K562 (cell line): ENCODE measurements at regions of chr10 and their contacts with region 1.

Region 1: GRCh38 chr10:4839401-4839800 is 13.4 kb downstream of the AKR1E2 start:
- DNase-seq: peak in 2 of 4 experiments; percentile 22 to 39
- ATAC-seq: peak; percentile 92
- H3K4me3 ChIP-seq: no peak overlapping the region
- H3K27ac ChIP-seq: no peak overlapping the region
- H3K4me1 ChIP-seq: peaks cover 0 to 2% of the 10 kb centered on the region in 2 experiments; a peak in 1 of 5 replicates
- H3K27me3 ChIP-seq: no peaks in the 10 kb centered on the region
- CTCF ChIP-seq: peak; percentile 29 to 38 (median 36); a peak in 4 of 6 replicates
- EP300 ChIP-seq: no peak
- POLR2A ChIP-seq: no peak
- RAD21 ChIP-seq: peak in 1 of 2 experiments; percentile 36; a peak in 2 of 4 replicates

Region 2: DNA sequence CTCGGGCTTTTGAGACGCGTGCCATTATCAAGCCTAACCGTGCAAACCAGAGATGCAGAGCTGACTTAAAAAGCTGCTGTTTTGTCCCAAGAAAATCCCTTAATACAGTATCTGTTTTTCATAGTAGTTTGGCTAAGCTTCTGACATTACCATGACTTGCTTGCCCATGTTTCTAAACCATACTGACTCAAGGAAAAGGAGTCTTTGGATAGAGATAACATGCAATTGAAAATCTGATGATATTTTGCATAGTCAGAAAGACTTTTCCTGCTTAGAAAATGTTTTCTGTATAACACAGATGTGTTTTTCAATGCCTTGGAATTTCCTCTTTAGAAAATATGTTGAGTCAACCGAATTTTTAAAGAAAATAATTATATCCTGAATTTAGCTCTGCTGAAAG is 34.9 kb before region 1 on chr10:
- CTCF ChIA-PET with region 1: no interaction called
- POLR2A ChIA-PET with region 1: no interaction called
- in situ Hi-C with region 1: no loop called
- intact Hi-C with region 1: no loop called
- DNase-seq: no peak
- ATAC-seq: no peak
- H3K4me3 ChIP-seq: no peak overlapping the region
- H3K27ac ChIP-seq: no peak overlapping the region
- H3K4me1 ChIP-seq: no peaks in the 10 kb centered on the region
- H3K27me3 ChIP-seq: peaks cover 13 to 22% of the 10 kb centered on the region in 2 experiments
- CTCF ChIP-seq: no peak
- EP300 ChIP-seq: no peak
- POLR2A ChIP-seq: no peak
- RAD21 ChIP-seq: no peak

Region 3: DNA sequence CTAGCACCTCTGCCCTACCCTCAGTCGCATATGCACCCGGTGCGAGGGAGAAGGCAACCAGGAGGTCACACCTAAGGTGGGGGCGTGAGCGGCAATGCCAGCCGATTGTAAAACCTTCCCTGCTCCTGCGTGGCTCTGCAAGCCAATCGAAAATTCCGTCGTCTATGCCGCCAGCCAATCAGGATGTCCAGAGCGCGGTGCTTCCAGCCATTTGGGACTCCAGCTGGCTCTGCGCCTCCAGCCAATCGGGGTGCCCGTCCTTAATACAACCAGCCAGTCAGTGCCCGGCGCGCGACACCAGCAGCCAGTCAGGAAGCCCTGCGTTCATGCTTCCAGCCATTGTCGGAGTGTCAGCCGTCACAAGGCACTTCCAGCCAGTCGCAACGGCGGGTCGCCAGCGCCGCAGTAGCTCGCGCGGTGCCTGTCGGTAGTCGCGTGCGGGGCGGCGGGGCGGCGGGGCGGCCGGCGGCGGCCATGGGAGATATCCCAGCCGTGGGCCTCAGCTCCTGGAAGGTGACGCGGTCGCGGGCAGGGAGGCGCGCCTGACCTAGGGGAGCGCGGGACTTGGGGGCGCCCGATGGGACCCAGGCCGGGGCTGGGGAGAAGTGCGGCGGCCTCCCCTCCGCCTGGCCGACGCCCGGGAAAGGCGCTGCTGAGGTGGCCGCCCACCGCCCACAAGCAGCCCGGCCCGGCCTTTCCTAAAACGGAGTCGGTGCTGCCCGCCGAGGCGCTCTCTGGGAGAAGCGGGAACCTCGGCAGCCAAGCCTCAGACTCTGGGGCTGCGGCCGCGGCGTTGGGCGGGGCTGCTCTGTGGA is 13.3 kb before region 1 on chr10 and contains the start of gene AKR1E2:
- CTCF ChIA-PET with region 1: no interaction called
- POLR2A ChIA-PET with region 1: interaction called, 25 read pairs
- in situ Hi-C with region 1: no loop called
- intact Hi-C with region 1: no loop called
- DNase-seq: peak; percentile 87 to 92 (median 90)
- ATAC-seq: peak; percentile 95
- H3K4me3 ChIP-seq: peak within 1 kb of the TSS; percentile 46
- H3K27ac ChIP-seq: peak within 1 kb of the TSS; percentile 88
- H3K4me1 ChIP-seq: peaks cover 24 to 29% of the 10 kb centered on the region in 2 experiments
- H3K27me3 ChIP-seq: no peaks in the 10 kb centered on the region
- CTCF ChIP-seq: no peak
- EP300 ChIP-seq: no peak
- POLR2A ChIP-seq: peak; percentile 79
- RAD21 ChIP-seq: no peak
- polyA plus RNA-seq, gene AKR1E2: 4.2 to 4.7 TPM